ENCODE measurements at regions of chr7 and their contacts with region 1.

Region 1: DNA sequence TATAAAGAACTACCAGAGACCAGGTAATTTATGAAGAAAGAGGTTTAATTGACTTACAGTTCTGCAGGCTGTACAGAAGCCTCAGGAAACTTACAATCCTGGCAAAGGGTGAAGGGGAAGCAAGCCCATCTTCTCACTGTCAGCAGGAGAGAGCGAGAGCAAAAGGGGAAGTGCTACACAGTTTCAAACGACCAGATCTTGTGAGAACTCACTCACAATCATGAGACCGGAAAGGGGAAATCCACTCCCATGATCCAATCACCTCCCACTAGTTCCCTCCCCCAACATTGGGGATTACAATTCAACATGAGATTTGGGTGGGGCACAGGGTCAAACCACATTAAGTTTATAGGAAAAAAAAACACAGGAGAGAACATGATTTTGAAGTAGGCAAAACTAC is 222.1 kb upstream of the SHH start:
- DNase-seq: no peak
- H3K4me3 ChIP-seq: no peak overlapping the region
- H3K27ac ChIP-seq: no peak overlapping the region
- H3K4me1 ChIP-seq: no peaks in the 10 kb centered on the region
- H3K27me3 ChIP-seq: no peaks in the 10 kb centered on the region
- CTCF ChIP-seq: no peak
- EP300 ChIP-seq: no peak
- POLR2A ChIP-seq: no peak

Region 2: GRCh38 chr7:156071612-156072011 is 37.2 kb after region 1 on chr7:
- intact Hi-C with region 1: loop called in 1 of 4 experiments (anchors 1 kb)
- DNase-seq: no peak
- H3K4me3 ChIP-seq: no peak overlapping the region
- H3K27ac ChIP-seq: no peak overlapping the region
- H3K4me1 ChIP-seq: no peaks in the 10 kb centered on the region
- H3K27me3 ChIP-seq: no peaks in the 10 kb centered on the region
- CTCF ChIP-seq: no peak
- EP300 ChIP-seq: no peak
- POLR2A ChIP-seq: no peak